ENCODE measurements at regions of chr1 and their contacts with region 1.

Region 1: GRCh38 chr1:25167331-25168199 is 64.7 kb downstream of the SYF2 start:
- DNase-seq: peak; percentile 93
- ATAC-seq: peak; percentile 85
- H3K4me3 ChIP-seq: peak overlapping the region; percentile 31 to 66 (median 35); a peak in 5 of 6 replicates
- H3K27ac ChIP-seq: peak overlapping the region; percentile 97
- H3K4me1 ChIP-seq: peaks cover 73% of the 10 kb centered on the region
- H3K27me3 ChIP-seq: no peaks in the 10 kb centered on the region
- CTCF ChIP-seq: peak; percentile 61
- EP300 ChIP-seq: peak; percentile 42 to 86; a peak in 3 of 4 replicates
- POLR2A ChIP-seq: peak in 1 of 2 experiments; percentile 49; a peak in 1 of 4 replicates
- RAD21 ChIP-seq: 0 out of 2 replicates have a peak, but pooled peaks have one; percentile 5

Region 2: GRCh38 chr1:25140073-25140797 is 27.3 kb before region 1 on chr1:
- CTCF ChIA-PET with region 1: no interaction called
- POLR2A ChIA-PET with region 1: interaction called, 12 read pairs
- in situ Hi-C with region 1: no loop called
- intact Hi-C with region 1: no loop called
- DNase-seq: peak; percentile 55
- ATAC-seq: peak; percentile 86
- H3K4me3 ChIP-seq: peak overlapping the region in 2 of 3 experiments; percentile 10 to 42; a peak in 2 of 6 replicates
- H3K27ac ChIP-seq: peak overlapping the region; percentile 36
- H3K4me1 ChIP-seq: peaks cover 45% of the 10 kb centered on the region
- H3K27me3 ChIP-seq: no peaks in the 10 kb centered on the region
- CTCF ChIP-seq: no peak
- EP300 ChIP-seq: no peak
- POLR2A ChIP-seq: no peak
- RAD21 ChIP-seq: no peak

Region 3: DNA sequence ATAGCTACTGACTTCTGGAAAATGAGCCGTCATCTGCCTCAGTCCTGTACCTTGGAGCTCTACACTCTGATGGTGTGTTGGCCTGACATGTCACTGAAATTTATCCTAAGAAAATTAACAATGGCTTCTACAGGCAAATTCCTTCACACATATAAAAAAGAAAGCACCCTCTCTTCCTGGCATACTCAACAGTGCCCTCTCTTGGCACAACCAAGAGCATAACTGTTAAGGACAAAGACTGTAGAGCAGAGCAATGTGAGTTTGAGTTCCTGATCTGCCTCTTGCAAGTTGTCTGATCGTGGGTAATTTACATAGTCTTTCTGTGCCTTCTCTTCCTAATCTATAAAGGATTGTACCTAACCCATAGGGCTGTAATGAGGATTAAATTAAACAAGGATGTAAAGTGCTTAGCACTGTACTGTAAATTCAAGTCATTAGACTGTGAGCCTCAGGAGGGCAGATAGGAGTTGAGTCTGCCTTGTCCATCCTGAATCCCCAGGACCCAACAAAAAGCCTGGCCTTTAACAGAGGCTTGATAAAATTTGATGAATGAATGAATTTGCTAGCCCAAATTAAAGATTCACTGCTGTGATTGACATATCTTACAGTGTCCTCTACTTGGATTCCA is 18.8 kb before region 1 on chr1:
- CTCF ChIA-PET with region 1: no interaction called
- POLR2A ChIA-PET with region 1: interaction called, 11 read pairs
- in situ Hi-C with region 1: no loop called
- intact Hi-C with region 1: no loop called
- DNase-seq: peak; percentile 27
- ATAC-seq: peak; percentile 37; the same call in 1 of the 3 replicates
- H3K4me3 ChIP-seq: no peak overlapping the region
- H3K27ac ChIP-seq: no peak overlapping the region
- H3K4me1 ChIP-seq: peaks cover 10% of the 10 kb centered on the region; the same call in 1 of the 2 replicates
- H3K27me3 ChIP-seq: no peaks in the 10 kb centered on the region
- CTCF ChIP-seq: peak; percentile 62
- EP300 ChIP-seq: no peak
- POLR2A ChIP-seq: no peak
- RAD21 ChIP-seq: peak; percentile 36; the same call in 1 of the 2 replicates

Region 4: GRCh38 chr1:25185409-25186160 is 18.0 kb after region 1 on chr1:
- CTCF ChIA-PET with region 1: no interaction called
- POLR2A ChIA-PET with region 1: interaction called, 16 read pairs
- in situ Hi-C with region 1: no loop called
- intact Hi-C with region 1: no loop called
- DNase-seq: no peak
- ATAC-seq: no peak
- H3K4me3 ChIP-seq: no peak overlapping the region
- H3K27ac ChIP-seq: no peak overlapping the region
- H3K4me1 ChIP-seq: peaks cover 15% of the 10 kb centered on the region
- H3K27me3 ChIP-seq: no peaks in the 10 kb centered on the region
- CTCF ChIP-seq: no peak
- EP300 ChIP-seq: no peak
- POLR2A ChIP-seq: no peak
- RAD21 ChIP-seq: no peak

Region 5: GRCh38 chr1:25198663-25199252 is 31.2 kb after region 1 on chr1:
- CTCF ChIA-PET with region 1: no interaction called
- POLR2A ChIA-PET with region 1: interaction called, 48 read pairs
- in situ Hi-C with region 1: loop called (anchors 5 kb)
- intact Hi-C with region 1: no loop called
- DNase-seq: peak; percentile 54
- ATAC-seq: peak; percentile 70
- H3K4me3 ChIP-seq: no peak overlapping the region
- H3K27ac ChIP-seq: no peak overlapping the region
- H3K4me1 ChIP-seq: peaks cover 79% of the 10 kb centered on the region
- H3K27me3 ChIP-seq: no peaks in the 10 kb centered on the region
- CTCF ChIP-seq: no peak
- EP300 ChIP-seq: no peak
- POLR2A ChIP-seq: no peak
- RAD21 ChIP-seq: 0 out of 2 replicates have a peak, but pooled peaks have one; percentile 22

Region 6: GRCh38 chr1:25232027-25232865 is 64.7 kb after region 1 on chr1 and contains the start of gene SYF2:
- CTCF ChIA-PET with region 1: no interaction called
- POLR2A ChIA-PET with region 1: interaction called, 23 read pairs
- in situ Hi-C with region 1: no loop called
- intact Hi-C with region 1: no loop called
- DNase-seq: peak; percentile 93
- ATAC-seq: peak; percentile 95
- H3K4me3 ChIP-seq: peak within 1 kb of the TSS; percentile 74 to 86 (median 84)
- H3K27ac ChIP-seq: peak within 1 kb of the TSS; percentile 82
- H3K4me1 ChIP-seq: peaks cover 21% of the 10 kb centered on the region
- H3K27me3 ChIP-seq: no peaks in the 10 kb centered on the region
- CTCF ChIP-seq: no peak
- EP300 ChIP-seq: no peak
- POLR2A ChIP-seq: peak; percentile 64 to 65
- RAD21 ChIP-seq: no peak; the same call in 1 of the 2 replicates
- total RNA-seq, gene SYF2: 34.1 and 42.8 TPM in 2 replicates

Measured in HepG2 (cell line).